Left ventricle myocardium superior (tissue), 1 donor: ENCODE measurements at regions of chr2 and their contacts with region 1.

Region 1: DNA sequence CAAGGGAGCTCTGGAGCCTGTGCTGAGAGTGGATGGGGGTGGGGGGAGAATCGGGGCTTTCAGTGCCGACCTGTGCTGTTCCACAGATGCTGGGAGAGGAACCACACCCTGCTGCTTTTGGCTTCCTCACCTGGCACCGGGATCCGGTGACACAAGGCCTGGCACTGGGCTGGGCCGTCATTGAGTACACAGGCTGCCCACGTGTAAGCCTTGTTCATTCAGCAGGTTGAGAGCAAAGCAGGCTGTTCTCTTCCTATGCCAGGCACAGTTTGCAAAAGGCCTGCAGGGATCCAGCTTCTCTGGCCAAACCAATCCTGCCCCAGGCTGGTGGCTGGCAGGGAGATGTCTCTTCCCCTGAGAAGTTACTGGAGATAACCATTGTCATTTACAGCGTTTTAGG is 17.1 kb downstream of the TRIB2 start:
- DNase-seq: peak; percentile 80
- ATAC-seq: peak; percentile 81

Region 2: DNA sequence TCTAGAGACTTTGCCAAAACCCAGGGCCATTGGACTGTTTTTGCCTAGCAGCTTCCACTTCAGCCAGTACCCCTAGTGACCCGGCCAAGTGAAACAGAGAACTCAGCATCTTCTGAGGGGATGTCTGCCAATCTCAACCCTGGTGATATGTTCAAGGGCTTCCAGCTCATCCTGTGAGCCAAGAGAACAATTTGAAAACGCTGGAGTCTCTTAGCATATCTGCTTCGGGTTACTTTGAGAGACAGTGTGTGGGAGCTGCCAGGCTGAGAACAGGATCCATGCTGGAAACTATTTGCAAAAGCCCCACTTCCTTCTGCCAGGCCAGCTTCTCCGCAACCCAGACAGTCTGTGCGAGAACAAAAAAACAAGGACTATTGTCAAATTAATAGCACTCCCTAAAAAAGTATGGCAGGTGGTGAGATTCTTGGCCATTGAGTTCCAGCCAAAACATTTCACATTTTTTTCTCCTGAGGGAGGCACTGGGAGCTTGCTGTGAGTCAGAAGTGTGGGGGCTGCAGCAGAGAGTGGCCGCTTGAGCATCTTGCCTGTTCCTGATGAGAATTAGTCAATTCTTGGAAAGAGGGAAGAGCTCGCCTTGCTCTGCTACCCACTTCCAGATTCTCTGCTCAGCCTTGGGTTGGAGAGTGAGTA is 412.7 kb before region 1 on chr2:
- intact Hi-C with region 1: no loop called
- DNase-seq: peak; percentile 63
- ATAC-seq: peak; percentile 89

Region 3: DNA sequence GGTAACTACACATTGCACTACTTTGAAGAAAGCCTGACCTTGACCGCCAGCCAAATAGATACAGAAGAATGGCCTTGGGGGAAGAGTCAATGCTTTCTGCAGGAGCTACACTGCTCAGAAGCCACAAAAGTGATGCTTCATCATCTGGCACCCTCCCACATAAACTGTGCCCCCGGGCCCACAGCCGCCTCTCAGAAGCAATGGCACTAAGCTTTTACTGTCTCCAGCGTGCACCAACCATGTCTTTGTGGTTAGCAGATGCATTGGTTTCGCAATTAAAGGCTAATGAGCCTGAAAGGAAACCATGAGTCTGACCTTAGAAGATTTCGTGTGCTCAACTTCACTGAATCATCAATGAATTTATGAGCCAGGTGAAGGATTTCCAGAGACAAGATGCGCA is 226.6 kb before region 1 on chr2:
- intact Hi-C with region 1: no loop called
- DNase-seq: no peak
- ATAC-seq: no peak

Region 4: DNA sequence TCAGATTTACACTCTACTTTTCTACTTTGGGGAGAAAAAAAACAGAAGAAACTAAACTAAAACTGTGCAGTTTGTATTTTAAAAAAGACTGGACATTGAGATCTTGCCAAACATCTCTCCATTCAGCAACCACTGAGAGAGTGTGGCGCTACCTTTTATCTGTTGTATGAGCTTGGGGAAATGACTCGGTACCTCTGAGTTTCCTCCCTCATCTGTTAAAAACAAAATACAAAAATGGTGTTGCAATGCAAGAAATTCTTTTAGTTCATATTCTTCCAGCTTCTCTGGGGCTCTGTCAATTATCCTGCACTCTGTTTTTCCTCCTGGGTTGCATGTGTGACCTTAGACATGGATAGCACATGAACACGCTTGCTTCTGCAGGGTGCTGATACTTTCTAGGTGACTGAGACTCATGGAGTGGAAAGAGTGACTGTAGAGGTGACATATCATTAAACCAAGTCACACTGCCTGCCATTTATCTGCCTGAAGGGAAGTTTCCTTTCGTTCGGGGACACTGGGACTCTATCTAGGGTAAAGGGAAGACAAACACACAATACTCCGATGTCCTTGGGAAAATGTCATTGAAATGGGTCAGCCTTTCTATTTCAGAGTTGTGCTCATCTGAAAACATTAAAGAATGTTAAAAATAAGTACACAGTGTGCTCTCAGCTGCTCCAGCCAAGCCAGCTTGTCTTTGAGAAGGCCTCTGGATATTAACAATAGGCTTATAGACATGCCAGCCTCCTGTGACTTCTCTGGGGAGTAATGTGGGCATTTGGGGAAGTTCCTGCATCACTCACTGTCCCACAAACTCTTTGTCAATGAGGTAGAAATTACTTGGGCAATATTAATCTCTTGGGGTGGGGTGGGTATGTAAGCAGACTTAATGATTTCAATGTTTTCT is 74.3 kb after region 1 on chr2:
- intact Hi-C with region 1: loop called (anchors 10 kb)
- DNase-seq: no peak
- ATAC-seq: peak; percentile 90